Left cardiac atrium (tissue), 4 donors: ENCODE measurements at regions of chr12 and their contacts with region 1.

Region 1: DNA sequence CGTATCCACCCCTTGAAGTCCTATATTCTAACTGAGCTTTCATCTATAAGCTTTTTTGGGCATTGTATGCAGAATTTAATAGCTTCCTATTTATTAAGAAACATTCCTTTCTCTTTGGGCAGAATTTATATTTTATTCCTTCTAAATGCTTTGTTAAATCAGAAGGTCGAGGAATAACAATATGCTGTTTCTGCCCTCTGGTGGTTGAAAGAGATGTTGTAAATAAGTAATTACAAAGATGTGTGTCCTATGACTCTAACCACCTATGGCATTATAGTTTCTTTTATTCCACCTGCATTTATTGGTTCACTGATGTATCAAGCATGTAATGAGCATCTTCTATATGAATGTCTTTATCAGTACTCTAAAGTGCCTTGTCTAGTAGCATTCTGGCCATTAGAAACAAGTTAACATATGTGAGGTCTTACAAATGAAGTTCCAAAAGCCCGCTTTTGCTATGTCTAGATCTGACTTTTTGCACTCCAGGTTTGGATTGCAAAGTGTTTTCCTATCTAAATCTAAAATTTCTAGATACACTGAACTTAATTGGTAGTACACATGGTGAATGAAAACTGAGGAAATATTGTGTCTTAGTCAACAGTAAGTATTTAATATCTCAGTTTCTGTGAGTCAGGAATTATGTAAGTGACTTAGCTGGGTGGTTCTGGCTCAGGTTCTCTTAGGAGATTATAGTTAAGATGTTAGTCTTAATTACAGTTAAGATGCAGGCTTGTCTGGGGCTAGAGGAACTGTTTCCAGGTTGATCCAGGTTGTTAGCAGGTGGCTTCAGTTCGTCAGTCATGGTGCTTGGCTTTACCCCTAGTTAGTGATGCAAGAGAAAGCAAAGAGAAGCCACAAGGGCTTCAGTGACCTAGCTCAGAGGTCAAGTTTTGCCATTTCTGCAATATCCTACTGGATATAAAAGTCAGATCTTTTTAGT is 57.5 kb downstream of the PLEKHA5 start:
- DNase-seq: no peak
- ATAC-seq: peak; percentile 32 to 38

Region 2: DNA sequence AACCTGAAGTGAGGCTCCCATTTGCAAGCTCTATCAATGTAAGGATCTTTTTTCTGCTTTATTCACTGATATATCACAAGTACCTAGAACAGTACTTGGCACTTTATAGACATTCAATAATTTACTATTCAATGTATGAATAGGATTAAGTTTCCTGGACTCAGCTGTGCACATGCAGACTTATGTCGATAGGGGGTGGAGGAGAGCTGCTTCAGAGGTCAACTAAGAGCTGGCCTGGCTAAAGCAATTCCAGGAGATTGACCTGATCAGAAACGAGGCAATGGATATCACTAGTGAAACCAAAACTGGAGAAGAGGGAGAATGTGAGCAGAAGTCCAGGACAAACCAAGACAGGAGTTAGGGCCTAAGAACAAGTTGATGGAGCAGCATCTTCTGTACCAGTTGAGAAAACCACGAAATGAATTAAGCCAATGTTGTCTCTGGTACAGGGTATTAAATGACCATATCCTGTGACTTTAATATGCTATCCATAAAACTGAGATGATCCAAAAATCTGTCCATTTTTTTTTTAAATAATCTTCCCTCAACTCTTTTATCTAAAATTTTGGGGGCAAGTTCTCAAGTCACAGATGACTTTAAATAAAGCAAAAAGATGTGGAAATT is 756.5 kb before region 1 on chr12:
- intact Hi-C with region 1: loop called in 1 of 2 experiments (anchors 10 kb)
- DNase-seq: peak; percentile 22
- ATAC-seq: peak; percentile 74 to 95

Region 3: GRCh38 chr12:18861287-18861858 is 325.6 kb before region 1 on chr12:
- intact Hi-C with region 1: loop called in 1 of 2 experiments (anchors 5 kb)
- DNase-seq: no peak
- ATAC-seq: no peak

Region 4: DNA sequence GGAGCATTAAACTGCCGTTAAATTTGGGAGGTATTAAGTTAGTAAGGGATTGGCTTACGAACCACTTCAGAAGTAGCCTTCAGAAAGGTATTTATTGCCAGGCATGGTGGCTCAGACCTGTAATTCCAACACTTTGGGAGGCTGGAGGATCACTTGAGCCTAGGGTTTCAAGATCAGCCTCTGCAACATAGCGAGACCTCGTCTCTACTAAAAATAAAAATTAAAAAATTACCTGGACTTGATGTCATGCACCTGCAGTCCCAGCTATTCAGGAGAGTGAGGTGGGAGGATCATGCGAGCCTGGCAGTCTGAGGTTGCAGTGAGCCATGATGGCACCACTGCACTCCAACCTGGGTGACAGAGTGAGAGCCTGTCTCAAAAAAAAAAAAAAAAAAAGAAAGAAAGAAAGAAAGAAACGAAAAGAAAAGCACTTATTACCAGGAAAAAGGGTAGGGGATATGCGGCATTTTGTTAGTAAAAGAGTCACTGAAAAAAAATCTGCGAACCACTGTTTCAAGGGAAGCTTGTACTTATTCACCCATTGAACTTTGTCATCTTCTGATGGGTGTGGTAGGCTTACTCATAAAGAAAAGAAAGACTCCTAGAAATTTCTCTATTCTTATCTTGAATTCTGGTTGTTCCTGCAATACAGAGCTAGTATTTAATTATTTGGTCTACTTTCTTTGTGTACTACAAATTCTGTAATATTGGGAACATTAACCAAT is 91.1 kb before region 1 on chr12:
- intact Hi-C with region 1: no loop called
- DNase-seq: no peak
- ATAC-seq: peak in 1 of 2 donors; percentile 60

Region 5: GRCh38 chr12:19129486-19130223 is 57.3 kb before region 1 on chr12 and contains the start of gene PLEKHA5:
- intact Hi-C with region 1: loop called (anchors 5 to 10 kb)
- DNase-seq: peak; percentile 80
- ATAC-seq: peak; percentile 95
- total RNA-seq, gene PLEKHA5: 36.9 to 53.4 TPM

Region 6: DNA sequence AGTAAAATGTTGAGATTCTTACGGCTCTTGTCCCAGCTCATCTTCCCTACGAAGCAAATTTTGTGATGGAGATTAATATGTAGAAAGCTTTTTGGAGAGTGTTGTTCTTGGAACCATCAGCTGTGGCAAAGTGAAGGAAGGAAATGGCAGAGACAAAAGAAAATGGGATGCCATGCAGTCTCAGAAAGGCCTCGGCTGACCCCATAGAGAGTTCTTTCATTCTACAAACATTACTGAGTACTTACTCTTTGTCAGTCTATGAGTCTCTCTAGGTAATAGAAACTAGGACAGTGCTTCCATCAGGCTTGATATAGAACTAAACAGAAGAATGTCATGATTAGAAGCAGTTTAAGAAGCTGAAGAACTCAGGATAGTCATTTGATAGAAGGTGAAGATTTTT is 76.7 kb after region 1 on chr12:
- intact Hi-C with region 1: no loop called
- DNase-seq: no peak
- ATAC-seq: no peak

Region 7: DNA sequence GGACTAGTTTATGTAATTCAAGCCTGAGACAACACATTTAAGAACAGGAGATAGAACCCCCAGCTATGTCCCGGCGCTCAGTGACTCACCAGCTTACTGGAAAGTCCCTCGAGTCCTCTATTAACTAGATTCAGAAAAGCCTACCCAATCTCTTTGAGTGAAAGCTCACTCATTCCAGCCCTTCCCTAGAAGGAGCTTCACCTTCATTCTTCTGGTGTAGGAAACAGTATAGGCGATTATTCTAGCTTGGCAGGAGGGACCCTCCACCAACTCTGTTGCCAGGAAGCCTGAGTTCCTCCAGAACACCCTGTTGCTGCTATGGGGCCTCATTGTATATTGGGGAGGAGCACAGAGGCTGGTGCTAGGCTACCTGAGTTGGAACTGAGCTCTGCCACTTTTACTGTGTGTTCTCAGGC is 195.1 kb after region 1 on chr12:
- intact Hi-C with region 1: no loop called
- DNase-seq: no peak
- ATAC-seq: peak; percentile 19 to 68